ENCODE measurements at regions of chr14 and their contacts with region 1.

Region 1: GRCh38 chr14:102255401-102256190 is 49.4 kb downstream of the MOK start:
- DNase-seq: no peak
- ATAC-seq: no peak
- H3K4me3 ChIP-seq: no peak overlapping the region
- H3K27ac ChIP-seq: no peak overlapping the region
- H3K4me1 ChIP-seq: peaks cover 14% of the 10 kb centered on the region
- H3K27me3 ChIP-seq: no peaks in the 10 kb centered on the region
- CTCF ChIP-seq: no peak
- POLR2A ChIP-seq: no peak

Region 2: DNA sequence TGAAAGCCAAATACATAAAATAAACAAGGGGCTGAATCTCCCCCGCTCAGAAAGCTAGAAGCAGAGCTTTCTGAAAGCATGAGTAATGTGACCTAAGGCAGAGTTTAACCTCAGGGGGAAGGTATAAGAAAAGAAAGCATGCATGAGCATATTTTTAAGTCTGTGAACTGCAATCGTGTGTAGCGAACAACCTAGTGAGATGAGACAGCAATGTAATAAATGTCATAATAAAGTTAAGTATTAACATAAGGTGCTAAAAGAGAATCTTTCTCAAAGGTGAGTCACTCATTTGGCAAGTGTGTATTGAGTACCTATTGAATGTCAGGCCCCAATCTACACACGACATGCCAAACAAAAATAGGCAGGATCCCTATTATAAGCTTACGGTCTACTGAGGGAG is 130.1 kb before region 1 on chr14:
- intact Hi-C with region 1: no loop called
- DNase-seq: no peak
- ATAC-seq: peak; percentile 77
- H3K4me3 ChIP-seq: no peak overlapping the region
- H3K27ac ChIP-seq: peak overlapping the region in 3 of 4 donors; percentile 24 to 66 (median 51)
- H3K4me1 ChIP-seq: peaks cover 10% of the 10 kb centered on the region
- H3K27me3 ChIP-seq: no peaks in the 10 kb centered on the region
- CTCF ChIP-seq: no peak
- POLR2A ChIP-seq: no peak

Region 3: GRCh38 chr14:102292441-102292840 is 36.8 kb after region 1 on chr14:
- intact Hi-C with region 1: loop called (anchors 5 kb)
- DNase-seq: no peak
- ATAC-seq: no peak
- H3K4me3 ChIP-seq: no peak overlapping the region
- H3K27ac ChIP-seq: no peak overlapping the region
- H3K4me1 ChIP-seq: peaks cover 9% of the 10 kb centered on the region
- H3K27me3 ChIP-seq: no peaks in the 10 kb centered on the region
- CTCF ChIP-seq: no peak
- POLR2A ChIP-seq: no peak

Measured in body of pancreas (tissue), 4 donors.